ENCODE measurements at regions of chr9 and their contacts with region 1.

Region 1: GRCh38 chr9:35489313-35490154 is at the start of gene RUSC2:
- DNase-seq: peak; percentile 94
- ATAC-seq: peak; percentile 93
- H3K4me3 ChIP-seq: peak within 1 kb of the TSS; percentile 84
- H3K27ac ChIP-seq: peak within 1 kb of the TSS; percentile 89
- H3K4me1 ChIP-seq: peaks cover 12% of the 10 kb centered on the region
- H3K27me3 ChIP-seq: no peaks in the 10 kb centered on the region
- CTCF ChIP-seq: peak; percentile 39
- total RNA-seq, gene RUSC2: 31.5 TPM

Region 2: DNA sequence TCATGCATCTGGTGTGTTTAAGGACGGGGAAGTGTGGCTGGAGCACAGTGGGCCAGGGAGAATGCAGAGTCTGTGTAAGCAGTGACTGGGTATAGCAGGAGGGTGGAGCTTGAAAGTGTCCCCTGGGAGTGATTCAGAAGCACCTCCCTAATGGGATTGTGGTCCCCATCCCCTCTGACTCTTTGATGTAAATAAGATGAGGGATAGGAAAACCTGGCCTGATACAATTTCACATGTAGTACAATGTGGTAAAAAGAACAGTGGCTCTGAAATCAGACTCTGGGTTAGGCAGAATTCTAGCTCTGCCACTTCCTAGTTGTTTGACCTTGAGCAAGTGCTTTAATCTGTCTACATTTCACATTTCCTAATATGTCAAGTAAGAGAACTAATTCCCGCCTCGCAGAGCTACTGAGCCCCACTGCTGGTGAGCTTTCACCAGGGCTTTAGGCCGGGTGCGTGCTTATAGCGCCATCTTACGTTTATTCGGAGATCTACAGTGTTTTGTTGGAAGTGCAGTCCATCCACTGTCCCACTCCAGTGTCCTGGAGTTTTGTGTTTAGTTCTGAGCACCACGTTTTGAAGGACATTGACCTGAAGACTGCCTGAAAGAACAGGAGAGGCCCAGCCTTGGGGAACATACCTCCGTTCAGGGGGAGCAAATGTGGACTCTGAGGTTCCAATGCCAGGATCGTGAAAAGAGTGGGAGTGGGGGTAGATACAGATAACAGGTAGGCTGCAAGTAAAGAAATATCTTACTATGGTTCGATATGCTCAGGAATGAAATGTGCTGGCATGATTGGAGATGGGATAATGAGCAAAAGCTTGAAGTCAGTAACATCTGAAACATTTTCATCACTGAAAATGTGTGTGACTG is 64.4 kb after region 1 on chr9:
- intact Hi-C with region 1: loop called (anchors 5 kb)
- DNase-seq: no peak
- ATAC-seq: peak; percentile 96
- H3K4me3 ChIP-seq: no peak overlapping the region
- H3K27ac ChIP-seq: peak overlapping the region; percentile 14
- H3K4me1 ChIP-seq: peaks cover 11% of the 10 kb centered on the region
- H3K27me3 ChIP-seq: no peaks in the 10 kb centered on the region
- CTCF ChIP-seq: peak; percentile 82

Region 3: GRCh38 chr9:35814841-35815543 is 325.5 kb after region 1 on chr9 and contains the start of gene HINT2:
- intact Hi-C with region 1: no loop called
- DNase-seq: peak; percentile 98
- ATAC-seq: peak; percentile 93
- H3K4me3 ChIP-seq: peak within 1 kb of the TSS; percentile 78
- H3K27ac ChIP-seq: peak within 1 kb of the TSS; percentile 96
- H3K4me1 ChIP-seq: peaks cover 31% of the 10 kb centered on the region
- H3K27me3 ChIP-seq: no peaks in the 10 kb centered on the region
- CTCF ChIP-seq: no peak
- total RNA-seq, gene HINT2: 37.1 TPM